OCI-LY7 (cell line): ENCODE measurements at regions of chr10 and their contacts with region 1.

Region 1: DNA sequence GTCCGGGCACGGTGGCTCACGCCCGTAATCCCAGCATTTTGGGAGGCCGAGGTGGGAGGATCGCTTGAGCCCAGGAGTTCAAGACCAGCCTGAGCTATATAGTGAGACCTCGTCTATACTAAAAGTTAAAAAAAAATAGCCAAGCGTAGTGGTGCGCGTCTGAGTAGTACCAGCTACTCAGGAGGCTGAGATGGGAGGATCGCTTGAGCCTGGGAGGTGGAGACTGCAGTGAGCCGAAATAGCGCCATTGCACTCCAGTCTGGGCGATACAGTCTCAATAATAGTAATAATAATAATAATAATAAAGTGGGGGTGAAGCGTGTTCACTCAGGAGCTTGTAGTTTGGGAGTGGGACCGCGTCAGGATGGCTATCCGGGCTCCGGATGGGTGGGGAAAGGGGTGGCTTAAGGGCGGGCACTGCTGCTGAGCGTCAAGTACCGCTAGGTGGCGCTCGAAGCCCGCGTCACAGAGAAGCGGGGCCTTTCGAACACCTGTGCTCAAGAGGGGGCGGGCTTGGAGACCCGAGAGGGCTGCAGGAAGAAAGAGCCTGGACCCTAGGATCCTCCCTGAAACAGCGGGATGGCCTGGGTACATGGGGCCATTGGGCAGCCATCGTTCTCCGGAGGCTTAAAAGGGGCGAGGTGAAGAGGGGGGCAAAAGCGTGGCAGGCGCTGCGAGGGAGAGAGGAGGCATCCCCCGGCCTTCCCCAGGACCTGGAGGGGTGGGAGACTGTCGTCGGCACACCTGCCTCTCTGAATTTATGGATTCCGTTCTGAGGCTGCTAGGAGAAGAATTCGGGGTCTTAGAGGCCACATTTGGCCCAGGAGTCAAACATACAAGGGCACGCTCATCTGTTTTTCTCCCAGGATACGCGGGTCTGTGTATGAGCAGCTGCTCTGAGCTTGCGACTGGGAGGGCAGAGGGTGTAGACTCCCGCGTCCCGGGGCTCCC is 14.5 kb downstream of the LBX1 start:
- DNase-seq: peak; percentile 81
- H3K4me3 ChIP-seq: no peak overlapping the region
- H3K27ac ChIP-seq: no peak overlapping the region
- H3K4me1 ChIP-seq: peaks cover 6% of the 10 kb centered on the region
- CTCF ChIP-seq: peak; percentile 88

Region 2: GRCh38 chr10:101161494-101162299 is 53.0 kb before region 1 on chr10:
- CTCF ChIA-PET with region 1: no interaction called
- POLR2A ChIA-PET with region 1: no interaction called
- intact Hi-C with region 1: loop called (anchors 5 kb)
- DNase-seq: peak; percentile 76
- H3K4me3 ChIP-seq: no peak overlapping the region
- H3K27ac ChIP-seq: no peak overlapping the region
- H3K4me1 ChIP-seq: no peaks in the 10 kb centered on the region
- CTCF ChIP-seq: peak; percentile 94

Region 3: DNA sequence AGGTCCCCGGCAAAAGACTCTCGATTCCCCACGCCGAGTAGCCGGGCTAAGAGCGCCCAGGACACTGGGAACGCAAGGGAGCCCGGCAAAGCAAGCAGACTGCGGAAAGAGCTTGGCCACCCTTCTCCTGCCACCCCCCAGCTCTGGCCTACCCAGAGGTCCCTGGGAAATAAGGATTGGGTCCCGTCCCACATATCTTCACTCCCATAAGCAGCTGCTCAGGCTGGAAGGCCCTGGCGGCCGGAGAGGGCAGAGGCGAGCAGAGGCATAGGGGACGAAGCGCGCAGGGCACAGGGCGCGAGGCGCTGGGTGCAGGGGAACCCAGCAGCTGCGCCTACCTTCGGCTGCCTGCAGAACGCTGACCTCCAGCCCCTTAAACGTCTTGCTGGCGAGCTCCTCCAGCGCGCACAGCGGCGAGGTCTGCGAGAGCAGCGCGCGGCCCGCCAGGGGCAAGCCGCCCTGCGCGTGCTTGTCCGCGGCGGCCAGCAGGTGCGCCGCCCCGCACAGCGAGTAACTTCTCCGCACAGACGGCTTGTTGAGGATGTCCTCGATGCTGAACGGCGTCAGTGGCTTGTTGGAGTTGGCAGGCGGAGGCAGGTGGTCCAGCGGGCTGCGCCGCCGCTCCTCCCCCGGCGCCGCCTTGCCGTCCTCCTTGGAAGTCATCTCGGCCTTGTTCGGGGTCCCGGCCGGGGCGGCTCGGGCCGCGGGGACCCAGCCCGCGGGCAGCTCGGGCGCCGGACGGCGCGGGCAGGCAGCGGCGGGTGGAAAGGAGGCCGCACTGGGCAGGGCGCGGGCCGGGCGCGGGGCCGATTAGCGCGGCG is 13.6 kb after region 1 on chr10:
- CTCF ChIA-PET with region 1: no interaction called
- POLR2A ChIA-PET with region 1: no interaction called
- intact Hi-C with region 1: no loop called
- DNase-seq: no peak
- H3K4me3 ChIP-seq: no peak overlapping the region
- H3K27ac ChIP-seq: no peak overlapping the region
- H3K4me1 ChIP-seq: no peaks in the 10 kb centered on the region
- CTCF ChIP-seq: no peak

Region 4: DNA sequence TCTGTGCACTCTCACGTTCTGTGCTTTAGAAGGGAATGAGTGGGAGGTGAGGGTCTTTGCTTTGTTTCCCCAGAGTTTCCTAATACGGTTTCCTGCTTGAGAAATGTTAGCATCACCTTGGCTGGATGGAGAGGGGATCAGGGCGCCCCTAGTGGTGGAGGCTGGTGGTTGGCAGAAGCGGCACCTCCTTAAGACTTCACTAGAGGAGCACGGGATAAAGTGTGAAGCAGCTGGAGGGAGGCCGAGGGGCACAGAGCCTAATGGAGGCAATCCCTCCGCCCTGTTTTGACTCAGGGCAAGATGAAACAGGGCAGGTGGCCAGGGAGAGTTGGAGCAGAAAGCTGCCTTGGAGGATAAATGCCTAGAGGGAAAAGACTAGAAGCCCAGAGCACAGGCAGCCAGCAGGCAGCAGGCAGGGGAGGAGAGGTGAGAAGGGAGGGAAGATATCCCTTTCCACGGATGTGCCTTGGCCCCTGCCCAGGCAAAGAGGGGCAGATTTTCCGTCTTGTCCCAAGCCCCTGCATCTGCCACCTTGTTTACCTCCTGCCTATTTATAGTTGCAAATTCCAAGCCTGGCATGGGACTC is 83.3 kb after region 1 on chr10:
- CTCF ChIA-PET with region 1: no interaction called
- POLR2A ChIA-PET with region 1: no interaction called
- intact Hi-C with region 1: loop called (anchors 5 kb)
- DNase-seq: peak; percentile 64
- H3K4me3 ChIP-seq: no peak overlapping the region
- H3K27ac ChIP-seq: no peak overlapping the region
- H3K4me1 ChIP-seq: no peaks in the 10 kb centered on the region
- CTCF ChIP-seq: peak; percentile 83

Region 5: GRCh38 chr10:101467286-101467770 is 252.6 kb after region 1 on chr10:
- CTCF ChIA-PET with region 1: no interaction called
- POLR2A ChIA-PET with region 1: interaction called, 3 read pairs
- intact Hi-C with region 1: loop called (anchors 5 kb)
- DNase-seq: peak; percentile 74
- H3K4me3 ChIP-seq: no peak overlapping the region
- H3K27ac ChIP-seq: no peak overlapping the region
- H3K4me1 ChIP-seq: no peaks in the 10 kb centered on the region
- CTCF ChIP-seq: peak; percentile 93

Region 6: GRCh38 chr10:101569838-101570766 is 355.4 kb after region 1 on chr10:
- CTCF ChIA-PET with region 1: interaction called, 3 read pairs
- POLR2A ChIA-PET with region 1: no interaction called
- intact Hi-C with region 1: loop called (anchors 1 kb)
- DNase-seq: peak; percentile 76
- H3K4me3 ChIP-seq: peak overlapping the region; percentile 66
- H3K27ac ChIP-seq: no peak overlapping the region
- H3K4me1 ChIP-seq: peaks cover 20% of the 10 kb centered on the region
- CTCF ChIP-seq: peak; percentile 81